ENCODE measurements at regions of chr1 and their contacts with region 1.

Region 1: DNA sequence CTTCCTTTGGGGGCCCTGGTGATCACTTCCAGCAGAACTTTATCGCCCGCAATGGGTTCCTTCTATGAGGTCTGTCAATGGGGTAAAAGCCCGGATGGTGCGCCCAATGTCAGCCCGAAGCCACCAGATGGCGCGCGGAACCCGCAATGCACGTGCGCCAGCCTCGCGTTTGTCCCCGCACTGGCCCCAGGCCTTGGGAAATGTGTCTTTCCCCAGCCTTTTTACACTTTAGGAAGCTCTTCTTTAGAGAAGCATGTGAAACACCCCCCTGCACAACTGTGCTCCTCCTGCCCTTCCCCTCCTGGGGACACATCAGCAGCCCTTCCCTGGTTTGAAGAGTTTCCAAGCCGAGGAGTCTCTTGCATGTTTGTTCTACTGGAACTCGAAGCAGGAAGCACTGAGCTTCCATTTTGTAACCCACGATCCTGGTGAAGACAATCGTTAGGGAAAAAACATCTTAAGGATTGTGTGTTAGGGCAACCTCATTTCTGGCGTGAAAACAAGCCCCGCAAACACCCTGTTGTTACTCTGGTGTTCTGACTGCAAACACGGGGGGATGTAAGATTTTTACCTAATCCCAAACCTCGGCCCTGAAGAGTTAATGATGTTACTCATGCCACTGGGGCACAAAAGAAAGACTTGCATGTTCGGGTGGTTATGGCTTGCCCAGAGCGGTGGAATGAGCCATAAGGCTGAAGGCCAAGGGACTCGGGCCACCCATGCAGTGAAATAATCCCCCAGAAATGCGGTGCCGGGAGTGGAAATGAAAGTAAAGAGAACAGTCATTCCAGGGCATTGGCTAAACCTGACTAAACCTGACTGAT is 20.4 kb upstream of the TARBP1 start:
- DNase-seq: peak; percentile 75 to 92
- H3K4me3 ChIP-seq: peak overlapping the region; percentile 16; the same call in 1 of the 2 replicates
- H3K27ac ChIP-seq: peak overlapping the region; percentile 85
- H3K4me1 ChIP-seq: peaks cover 90% of the 10 kb centered on the region
- H3K27me3 ChIP-seq: no peaks in the 10 kb centered on the region
- CTCF ChIP-seq: peak; percentile 95

Region 2: DNA sequence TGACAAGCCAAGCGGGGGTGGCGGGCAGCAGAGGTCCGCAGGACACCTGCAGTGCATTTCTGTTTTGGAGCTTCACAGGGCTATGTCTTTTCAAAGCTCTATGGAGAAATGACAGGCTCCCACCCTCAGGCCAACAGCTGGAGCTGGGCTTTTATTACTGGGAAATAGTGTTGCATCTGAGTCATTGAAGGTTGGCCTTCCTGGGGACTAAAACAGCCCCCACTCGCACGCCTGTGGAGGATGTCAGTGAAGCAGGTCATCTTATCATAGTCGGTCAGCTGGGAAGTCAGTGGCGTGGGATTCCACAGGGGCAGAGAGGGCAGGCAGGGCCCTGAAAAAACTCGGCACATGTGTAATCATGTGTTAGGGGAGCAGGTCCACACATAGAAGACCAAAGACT is 1493.6 kb before region 1 on chr1:
- CTCF ChIA-PET with region 1: no interaction called
- POLR2A ChIA-PET with region 1: no interaction called
- intact Hi-C with region 1: no loop called
- DNase-seq: no peak
- H3K4me3 ChIP-seq: no peak overlapping the region
- H3K27ac ChIP-seq: no peak overlapping the region
- H3K4me1 ChIP-seq: no peaks in the 10 kb centered on the region
- H3K27me3 ChIP-seq: no peaks in the 10 kb centered on the region
- CTCF ChIP-seq: no peak

Region 3: DNA sequence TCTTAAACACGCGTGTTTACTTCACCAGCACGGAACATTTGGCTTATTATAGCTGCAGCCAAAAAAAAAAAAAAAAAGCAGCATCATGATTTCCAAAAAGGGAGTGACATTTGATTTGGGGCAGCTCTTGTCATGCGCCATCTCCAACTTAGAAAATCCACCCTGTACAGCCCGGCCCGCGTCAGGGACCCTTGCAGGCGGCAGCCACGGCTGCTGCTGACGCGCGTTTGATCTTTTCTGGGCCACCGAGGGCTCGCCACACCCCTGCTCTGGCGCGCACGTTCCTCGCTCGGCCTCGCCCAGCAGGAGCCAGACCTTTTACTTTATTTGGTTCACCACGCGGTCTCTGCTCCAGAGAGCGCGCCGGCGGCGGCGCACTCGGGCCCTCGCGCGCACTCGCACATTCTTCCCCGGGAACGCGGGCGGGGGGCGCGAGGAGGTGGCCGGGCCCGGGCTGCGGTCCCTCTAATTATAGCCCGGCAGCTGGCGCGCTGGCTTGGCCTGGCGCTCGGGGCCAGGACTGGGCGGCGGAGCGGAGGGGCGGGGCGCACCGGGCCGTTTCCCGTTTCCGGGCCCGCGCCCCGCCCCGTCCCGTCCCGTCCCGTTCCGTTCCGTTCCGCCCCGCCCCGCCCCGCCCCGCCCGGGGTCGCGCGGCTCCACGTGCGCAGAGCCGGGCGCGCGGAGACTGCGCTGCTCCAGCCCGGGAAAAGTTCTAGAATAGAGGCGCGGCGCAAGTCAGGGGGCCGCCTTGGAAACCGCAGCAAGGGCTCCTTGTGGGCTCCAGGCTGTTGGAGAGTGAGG is 100.5 kb after region 1 on chr1:
- CTCF ChIA-PET with region 1: interaction called, 17 read pairs
- POLR2A ChIA-PET with region 1: interaction called, 4 read pairs
- intact Hi-C with region 1: loop called (anchors 1 kb)
- DNase-seq: peak; percentile 69 to 89
- H3K4me3 ChIP-seq: peak overlapping the region; percentile 62
- H3K27ac ChIP-seq: peak overlapping the region; percentile 99
- H3K4me1 ChIP-seq: peaks cover 61% of the 10 kb centered on the region
- H3K27me3 ChIP-seq: no peaks in the 10 kb centered on the region
- CTCF ChIP-seq: no peak; the same call in 1 of the 2 replicates

Region 4: GRCh38 chr1:234772345-234773147 is 273.2 kb after region 1 on chr1:
- CTCF ChIA-PET with region 1: no interaction called
- POLR2A ChIA-PET with region 1: no interaction called
- intact Hi-C with region 1: loop called (anchors 1 kb)
- DNase-seq: peak; percentile 95 to 99
- H3K4me3 ChIP-seq: peak overlapping the region; percentile 35; the same call in 1 of the 2 replicates
- H3K27ac ChIP-seq: peak overlapping the region; percentile 95
- H3K4me1 ChIP-seq: peaks cover 22% of the 10 kb centered on the region
- H3K27me3 ChIP-seq: no peaks in the 10 kb centered on the region
- CTCF ChIP-seq: no peak

Region 5: GRCh38 chr1:234925440-234926263 is 426.3 kb after region 1 on chr1:
- CTCF ChIA-PET with region 1: interaction called, 4 read pairs
- POLR2A ChIA-PET with region 1: interaction called, 8 read pairs
- intact Hi-C with region 1: loop called (anchors 1 kb)
- DNase-seq: peak; percentile 74 to 99
- H3K4me3 ChIP-seq: no peak overlapping the region
- H3K27ac ChIP-seq: peak overlapping the region; percentile 88
- H3K4me1 ChIP-seq: peaks cover 37% of the 10 kb centered on the region
- H3K27me3 ChIP-seq: no peaks in the 10 kb centered on the region
- CTCF ChIP-seq: no peak

Region 6: DNA sequence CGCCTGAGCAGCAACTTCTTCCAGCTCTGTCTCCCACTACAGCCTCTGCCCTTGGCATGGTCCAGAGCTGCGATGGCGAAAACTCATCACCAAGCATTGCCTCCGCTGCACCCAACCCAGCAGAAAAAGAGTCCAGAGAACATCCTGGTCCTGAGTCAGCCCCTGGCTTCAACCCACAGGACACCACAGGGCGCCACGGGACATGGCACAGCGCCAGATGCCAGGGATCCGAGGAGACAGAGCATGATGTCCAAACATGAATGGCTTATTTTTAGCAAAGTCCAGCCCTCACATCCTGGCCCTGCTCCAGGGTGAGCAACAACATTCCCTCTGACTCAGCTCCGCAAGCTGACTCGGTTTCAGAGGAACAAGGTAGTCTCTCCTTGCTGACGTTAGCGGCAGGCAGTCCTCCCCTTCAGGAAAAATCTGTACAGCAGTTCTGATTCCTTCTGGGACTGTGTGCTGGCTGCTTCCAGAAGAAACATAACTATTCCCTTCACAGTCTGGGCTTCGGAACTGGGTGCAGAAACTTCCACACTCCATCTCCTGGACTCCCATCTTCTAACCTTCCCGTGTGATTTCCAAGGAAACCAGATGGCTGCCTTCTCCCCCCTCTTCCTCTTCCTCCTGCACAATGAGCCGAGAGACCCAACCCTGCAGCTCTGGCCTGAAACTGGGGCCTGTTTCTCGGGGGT is 498.0 kb after region 1 on chr1:
- CTCF ChIA-PET with region 1: no interaction called
- POLR2A ChIA-PET with region 1: interaction called, 3 read pairs
- intact Hi-C with region 1: loop called (anchors 1 kb)
- DNase-seq: peak; percentile 99 to 100
- H3K4me3 ChIP-seq: peak overlapping the region; percentile 45
- H3K27ac ChIP-seq: peak overlapping the region; percentile 100
- H3K4me1 ChIP-seq: peaks cover 34% of the 10 kb centered on the region
- H3K27me3 ChIP-seq: no peaks in the 10 kb centered on the region
- CTCF ChIP-seq: no peak

Region 7: DNA sequence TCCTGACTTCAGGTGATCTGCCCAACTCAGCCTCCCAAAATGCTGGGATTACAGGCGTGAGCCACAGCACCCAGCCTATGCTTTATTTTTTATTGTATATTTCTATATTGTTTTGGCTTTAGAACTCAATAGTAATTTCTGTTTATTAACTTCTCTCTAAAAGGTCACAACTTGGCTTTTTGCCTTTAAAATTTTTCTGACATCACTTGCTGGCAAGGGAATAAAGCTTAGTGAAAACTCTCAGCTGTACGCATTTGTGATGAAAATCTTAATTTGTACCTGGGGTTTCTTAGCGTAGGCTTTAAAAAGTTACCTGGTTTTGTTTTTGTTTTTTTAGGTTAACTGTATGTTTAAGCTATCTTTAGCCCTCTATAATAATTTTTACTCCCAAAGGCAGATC is 968.7 kb after region 1 on chr1:
- CTCF ChIA-PET with region 1: no interaction called
- POLR2A ChIA-PET with region 1: interaction called, 15 read pairs
- intact Hi-C with region 1: no loop called
- DNase-seq: no peak
- H3K4me3 ChIP-seq: no peak overlapping the region
- H3K27ac ChIP-seq: no peak overlapping the region
- H3K4me1 ChIP-seq: peaks cover 15% of the 10 kb centered on the region
- H3K27me3 ChIP-seq: no peaks in the 10 kb centered on the region
- CTCF ChIP-seq: no peak

Measured in PC-9 (cell line).